T-cell (primary cell): ENCODE measurements at regions of chr3 and their contacts with region 1.

Region 1: DNA sequence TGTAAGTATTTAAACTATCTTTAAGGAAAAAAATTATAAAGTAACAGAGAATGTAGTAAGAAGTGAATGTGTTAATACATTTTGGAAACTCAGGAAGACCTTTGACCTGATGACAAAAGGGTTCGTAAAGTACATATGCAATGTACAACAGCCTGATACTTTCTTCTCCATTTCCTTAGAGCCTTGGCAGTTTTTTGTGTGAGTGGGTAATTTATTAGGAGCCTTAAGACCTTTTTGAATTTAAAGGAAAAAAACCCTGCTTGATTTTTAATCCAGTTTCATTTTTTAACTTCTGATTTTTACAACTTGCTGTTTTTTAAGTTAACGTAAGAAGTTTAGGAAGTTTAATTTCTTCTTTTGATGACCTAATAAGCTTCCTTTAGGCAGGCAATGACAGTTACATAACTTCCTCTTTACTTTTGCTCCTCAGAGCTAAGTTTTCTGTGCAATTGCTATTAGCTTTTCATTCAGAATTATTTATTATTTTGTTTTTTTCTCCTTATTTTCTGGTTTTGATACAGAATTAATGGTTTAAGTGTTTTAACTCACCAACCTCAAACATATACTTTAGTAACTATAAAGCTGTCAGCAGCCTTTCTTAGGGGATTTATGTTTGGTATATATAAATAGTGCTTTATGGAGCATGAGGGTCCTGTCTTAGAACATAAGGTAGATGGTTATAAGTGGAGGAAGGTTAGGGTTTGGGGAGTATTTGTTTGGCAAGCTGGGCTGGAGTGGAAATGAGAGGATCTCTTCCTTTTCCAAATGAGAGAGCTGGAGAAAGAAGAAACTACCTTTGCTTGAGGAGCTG is 35.2 kb downstream of the ARMC8 start:
- DNase-seq: no peak
- ATAC-seq: no peak
- H3K4me3 ChIP-seq: no peak overlapping the region
- H3K4me3 Mint-ChIP-seq: no peak overlapping the region
- H3K27ac ChIP-seq: no peak overlapping the region
- H3K27ac Mint-ChIP-seq: peak overlapping the region; percentile 66 to 78
- H3K4me1 ChIP-seq: peaks cover 0 to 4% of the 10 kb centered on the region in 2 experiments
- H3K4me1 Mint-ChIP-seq: peaks cover 40 to 50% (median 40%) of the 10 kb centered on the region in 3 donors
- H3K27me3 ChIP-seq: no peaks in the 10 kb centered on the region
- H3K27me3 Mint-ChIP-seq: no peaks in the 10 kb centered on the region

Region 2: DNA sequence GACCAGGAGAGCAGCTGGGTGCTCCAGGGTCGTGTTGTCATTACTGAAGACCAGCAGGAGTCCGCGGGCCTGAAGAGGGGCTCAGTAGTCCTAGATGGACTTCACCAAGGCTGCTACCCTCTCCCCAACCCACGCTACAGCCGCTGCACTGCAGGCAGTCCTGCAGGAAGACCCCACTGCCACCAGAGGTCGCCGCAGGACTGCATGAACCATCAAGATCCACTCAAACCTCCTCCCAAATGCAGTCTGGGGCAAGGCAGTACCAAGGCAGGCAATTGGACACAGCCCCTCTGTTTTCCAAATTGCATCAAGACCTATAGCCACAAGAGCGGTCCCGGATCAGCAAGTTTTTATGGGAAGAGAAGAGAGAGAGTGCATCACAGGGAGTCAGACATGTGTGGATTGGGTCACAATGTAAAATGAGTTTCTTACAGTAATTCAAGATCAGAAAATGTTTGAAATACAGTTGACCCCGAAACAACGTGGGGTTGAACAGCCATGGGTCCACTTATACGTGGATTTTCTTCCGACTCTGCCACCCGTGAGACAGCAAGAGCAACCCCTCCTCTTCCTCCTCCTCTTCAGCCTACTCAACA is 153.7 kb before region 1 on chr3:
- CTCF ChIA-PET with region 1: no interaction called
- POLR2A ChIA-PET with region 1: no interaction called
- DNase-seq: peak; percentile 14 to 76 (median 58)
- ATAC-seq: peak; percentile 64 to 77 (median 72)
- H3K4me3 ChIP-seq: no peak overlapping the region
- H3K4me3 Mint-ChIP-seq: no peak overlapping the region
- H3K27ac ChIP-seq: no peak overlapping the region
- H3K27ac Mint-ChIP-seq: no peak overlapping the region
- H3K4me1 ChIP-seq: no peaks in the 10 kb centered on the region
- H3K4me1 Mint-ChIP-seq: no peaks in the 10 kb centered on the region
- H3K27me3 ChIP-seq: peaks cover 0 to 48% of the 10 kb centered on the region in 2 experiments
- H3K27me3 Mint-ChIP-seq: peaks cover 12 to 22% of the 10 kb centered on the region in 2 donors

Region 3: GRCh38 chr3:138186803-138187295 is 35.5 kb before region 1 on chr3:
- CTCF ChIA-PET with region 1: interaction called in 1 of 2 experiments, 6 read pairs
- POLR2A ChIA-PET with region 1: interaction called in 1 of 2 experiments, 10 read pairs
- DNase-seq: peak; percentile 76 to 94 (median 87)
- ATAC-seq: peak; percentile 92 to 97 (median 94)
- H3K4me3 ChIP-seq: peak overlapping the region; percentile 85 to 94
- H3K4me3 Mint-ChIP-seq: peak overlapping the region; percentile 93 to 98 (median 95)
- H3K27ac ChIP-seq: peak overlapping the region; percentile 88
- H3K27ac Mint-ChIP-seq: peak overlapping the region; percentile 97 to 99
- H3K4me1 ChIP-seq: peaks cover 8 to 11% of the 10 kb centered on the region in 2 experiments
- H3K4me1 Mint-ChIP-seq: peaks cover 39 to 54% (median 43%) of the 10 kb centered on the region in 3 donors
- H3K27me3 ChIP-seq: peaks cover 0 to 14% of the 10 kb centered on the region in 2 experiments
- H3K27me3 Mint-ChIP-seq: peaks cover 7 to 14% of the 10 kb centered on the region in 2 donors